Mammary epithelial cell (primary cell): ENCODE measurements at regions of chr22 and their contacts with region 1.

Region 1: GRCh38 chr22:37051391-37052385 is at the start of gene KCTD17:
- DNase-seq: peak; percentile 53
- H3K4me3 ChIP-seq: peak within 1 kb of the TSS; percentile 56 to 67 (median 61)
- H3K27ac ChIP-seq: no peak within 1 kb of the TSS
- H3K4me1 ChIP-seq: peaks cover 5% of the 10 kb centered on the region
- H3K27me3 ChIP-seq: no peaks in the 10 kb centered on the region
- CTCF ChIP-seq: no peak
- total RNA-seq, gene KCTD17: 19.2 to 25.9 TPM

Region 2: GRCh38 chr22:36865346-36865745 is 186.3 kb before region 1 on chr22:
- CTCF ChIA-PET with region 1: no interaction called
- dilution Hi-C with region 1: loop called (anchors 5 kb)
- in situ Hi-C with region 1: no loop called
- intact Hi-C with region 1: no loop called
- DNase-seq: peak; percentile 25
- H3K4me3 ChIP-seq: no peak overlapping the region
- H3K27ac ChIP-seq: no peak overlapping the region
- H3K4me1 ChIP-seq: peaks cover 9% of the 10 kb centered on the region
- H3K27me3 ChIP-seq: no peaks in the 10 kb centered on the region
- CTCF ChIP-seq: no peak

Region 3: DNA sequence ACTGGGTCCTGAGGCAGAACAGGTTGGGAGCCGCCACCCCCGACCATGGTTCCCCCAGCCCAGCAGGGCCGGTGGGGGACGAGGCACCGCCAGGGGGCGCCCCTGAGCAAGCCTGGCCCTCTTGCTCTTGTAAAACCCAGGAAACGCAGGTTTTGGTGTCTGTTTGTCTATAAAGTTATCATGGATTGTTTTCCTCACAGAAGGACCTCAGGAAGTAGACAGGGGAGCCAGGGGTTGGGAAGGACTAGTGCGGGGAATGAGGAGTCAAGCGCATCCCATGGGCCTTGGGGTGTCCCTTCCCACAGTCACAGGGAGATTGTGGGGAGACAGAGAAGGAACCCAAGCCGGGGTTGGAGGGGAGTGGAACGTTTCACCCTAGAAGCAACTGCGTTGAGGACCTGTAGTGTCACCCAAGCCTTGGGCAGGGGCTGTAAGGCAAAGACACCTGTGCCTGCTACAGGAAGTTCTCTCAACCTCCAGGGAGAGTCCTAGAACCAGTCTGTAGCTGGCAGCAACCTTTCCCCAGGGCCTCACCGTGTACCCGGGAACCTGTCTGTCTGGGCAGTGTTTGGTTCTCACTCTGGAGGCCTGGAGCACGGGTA is 26.3 kb after region 1 on chr22:
- CTCF ChIA-PET with region 1: no interaction called
- dilution Hi-C with region 1: no loop called
- in situ Hi-C with region 1: no loop called
- intact Hi-C with region 1: no loop called
- DNase-seq: peak; percentile 7
- H3K4me3 ChIP-seq: no peak overlapping the region
- H3K27ac ChIP-seq: no peak overlapping the region
- H3K4me1 ChIP-seq: no peaks in the 10 kb centered on the region
- H3K27me3 ChIP-seq: no peaks in the 10 kb centered on the region
- CTCF ChIP-seq: peak; percentile 91 to 100

Region 4: GRCh38 chr22:37115032-37115431 is 63.3 kb after region 1 on chr22:
- CTCF ChIA-PET with region 1: no interaction called
- dilution Hi-C with region 1: loop called (anchors 5 kb)
- in situ Hi-C with region 1: no loop called
- intact Hi-C with region 1: no loop called
- DNase-seq: no peak
- H3K4me3 ChIP-seq: no peak overlapping the region
- H3K27ac ChIP-seq: no peak overlapping the region
- H3K4me1 ChIP-seq: no peaks in the 10 kb centered on the region
- H3K27me3 ChIP-seq: no peaks in the 10 kb centered on the region
- CTCF ChIP-seq: no peak

Region 5: GRCh38 chr22:37186228-37186996 is 134.7 kb after region 1 on chr22:
- CTCF ChIA-PET with region 1: interaction called, 3 read pairs
- dilution Hi-C with region 1: loop called (anchors 10 kb)
- in situ Hi-C with region 1: no loop called
- intact Hi-C with region 1: no loop called
- DNase-seq: peak; percentile 68
- H3K4me3 ChIP-seq: no peak overlapping the region
- H3K27ac ChIP-seq: no peak overlapping the region
- H3K4me1 ChIP-seq: peaks cover 33% of the 10 kb centered on the region
- H3K27me3 ChIP-seq: no peaks in the 10 kb centered on the region
- CTCF ChIP-seq: no peak

Region 6: DNA sequence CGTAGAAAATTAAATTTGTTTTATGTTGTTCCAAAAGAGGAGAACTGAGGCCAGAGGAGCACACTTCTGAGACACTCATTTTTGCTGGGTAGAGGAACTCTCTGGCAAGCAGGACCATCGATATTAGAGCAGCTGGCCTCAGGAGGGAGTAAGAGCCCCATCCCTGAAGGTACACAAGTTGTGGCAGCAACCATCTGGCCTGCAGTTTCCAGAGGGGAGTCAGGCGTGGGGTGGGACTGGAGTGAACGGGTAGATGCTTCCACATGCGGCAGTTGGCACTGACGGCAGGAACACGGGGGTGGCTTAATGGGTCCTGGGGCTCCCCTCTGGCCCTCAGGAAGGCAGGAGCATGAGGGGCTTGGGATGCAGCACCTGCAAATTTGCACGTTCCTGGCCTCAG is 173.8 kb after region 1 on chr22:
- CTCF ChIA-PET with region 1: no interaction called
- dilution Hi-C with region 1: no loop called
- in situ Hi-C with region 1: no loop called
- intact Hi-C with region 1: no loop called
- DNase-seq: no peak
- H3K4me3 ChIP-seq: no peak overlapping the region
- H3K27ac ChIP-seq: no peak overlapping the region
- H3K4me1 ChIP-seq: peaks cover 23% of the 10 kb centered on the region
- H3K27me3 ChIP-seq: no peaks in the 10 kb centered on the region
- CTCF ChIP-seq: peak in 1 of 2 donors; percentile 40

Region 7: GRCh38 chr22:37244114-37244921 is 192.6 kb after region 1 on chr22 and contains the start of gene RAC2:
- CTCF ChIA-PET with region 1: no interaction called
- dilution Hi-C with region 1: no loop called
- in situ Hi-C with region 1: no loop called
- intact Hi-C with region 1: no loop called
- DNase-seq: peak; percentile 73
- H3K4me3 ChIP-seq: peak within 1 kb of the TSS; percentile 60 to 83 (median 79)
- H3K27ac ChIP-seq: peak within 1 kb of the TSS; percentile 42
- H3K4me1 ChIP-seq: peaks cover 36% of the 10 kb centered on the region
- H3K27me3 ChIP-seq: no peaks in the 10 kb centered on the region
- CTCF ChIP-seq: no peak
- total RNA-seq, gene RAC2: 13.2 to 119 TPM

Region 8: GRCh38 chr22:37330200-37331033 is 278.7 kb after region 1 on chr22:
- CTCF ChIA-PET with region 1: no interaction called
- dilution Hi-C with region 1: loop called (anchors 10 kb)
- in situ Hi-C with region 1: no loop called
- intact Hi-C with region 1: no loop called
- DNase-seq: peak; percentile 65
- H3K4me3 ChIP-seq: no peak overlapping the region
- H3K27ac ChIP-seq: peak overlapping the region; percentile 85
- H3K4me1 ChIP-seq: peaks cover 55% of the 10 kb centered on the region
- H3K27me3 ChIP-seq: no peaks in the 10 kb centered on the region
- CTCF ChIP-seq: peak in 1 of 2 donors; percentile 59

Region 9: GRCh38 chr22:37428649-37429586 is 377.2 kb after region 1 on chr22:
- CTCF ChIA-PET with region 1: no interaction called
- dilution Hi-C with region 1: loop called (anchors 10 kb)
- in situ Hi-C with region 1: no loop called
- intact Hi-C with region 1: no loop called
- DNase-seq: no peak
- H3K4me3 ChIP-seq: no peak overlapping the region
- H3K27ac ChIP-seq: no peak overlapping the region
- H3K4me1 ChIP-seq: peaks cover 36% of the 10 kb centered on the region
- H3K27me3 ChIP-seq: no peaks in the 10 kb centered on the region
- CTCF ChIP-seq: peak; percentile 49 to 65